WTC11 (cell line): ENCODE measurements at regions of chr11 and their contacts with region 1.

Region 1: GRCh38 chr11:57761301-57762234 is at the start of gene CTNND1:
- DNase-seq: peak; percentile 74
- ATAC-seq: peak; percentile 96
- H3K4me3 Mint-ChIP-seq: peak within 1 kb of the TSS; percentile 99
- H3K27ac Mint-ChIP-seq: peak within 1 kb of the TSS; percentile 100
- H3K4me1 Mint-ChIP-seq: peaks cover 34% of the 10 kb centered on the region
- H3K27me3 Mint-ChIP-seq: no peaks in the 10 kb centered on the region
- CTCF ChIP-seq: no peak
- total RNA-seq, gene CTNND1: 164 to 165 TPM (median 164 TPM) in 3 replicates

Region 2: GRCh38 chr11:57205041-57205671 is 556.4 kb before region 1 on chr11:
- CTCF ChIA-PET with region 1: no interaction called
- POLR2A ChIA-PET with region 1: no interaction called
- DNase-seq: no peak
- ATAC-seq: peak; percentile 89
- H3K4me3 Mint-ChIP-seq: peak overlapping the region; percentile 28; the same call in 1 of the 2 replicates
- H3K27ac Mint-ChIP-seq: peak overlapping the region; percentile 85; the same call in 1 of the 2 replicates
- H3K4me1 Mint-ChIP-seq: peaks cover 39% of the 10 kb centered on the region
- H3K27me3 Mint-ChIP-seq: peaks cover 4% of the 10 kb centered on the region
- CTCF ChIP-seq: no peak

Region 3: DNA sequence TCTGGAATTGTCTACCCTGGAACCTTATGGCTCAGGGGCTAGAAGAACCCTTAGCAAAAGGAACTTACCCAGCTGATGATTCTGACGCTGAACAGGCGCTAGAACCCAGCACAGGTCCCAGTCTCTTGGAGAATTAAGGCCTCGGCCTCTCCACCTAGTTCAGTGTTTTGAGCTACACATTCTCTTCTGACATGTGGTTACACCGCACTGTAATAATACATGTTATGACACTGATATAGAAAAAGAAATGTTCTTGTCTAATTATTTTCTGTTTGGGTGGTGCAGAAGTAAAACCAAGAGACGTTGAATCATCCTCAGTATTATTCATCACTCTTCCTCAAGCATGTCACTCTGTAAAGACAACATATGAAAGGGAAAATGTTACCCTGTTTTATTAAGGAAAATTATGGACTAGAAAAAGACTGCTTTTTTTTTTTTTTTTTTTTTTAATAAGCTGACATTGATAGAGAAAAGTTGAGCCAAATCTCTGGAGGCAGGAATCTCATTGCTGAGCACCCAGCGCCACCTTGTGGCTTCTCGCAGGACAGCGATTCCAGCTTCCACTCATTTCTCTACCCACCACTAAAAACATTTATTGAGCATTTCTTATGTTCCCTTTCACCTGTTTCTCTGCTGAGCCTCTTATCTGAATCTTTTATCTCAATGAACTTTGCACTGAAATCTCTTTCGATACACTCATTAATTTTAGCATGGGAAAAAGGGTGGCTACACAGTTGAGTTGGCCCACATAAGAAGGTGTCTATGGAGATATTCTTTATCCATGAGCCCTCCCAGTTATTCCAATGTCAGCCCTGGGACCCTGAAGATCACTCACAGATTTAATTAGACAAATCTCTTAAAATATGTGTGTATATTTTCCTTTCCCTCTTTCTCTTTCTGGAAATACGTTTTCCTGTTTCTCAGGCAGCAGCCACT is 511.9 kb before region 1 on chr11:
- CTCF ChIA-PET with region 1: no interaction called
- POLR2A ChIA-PET with region 1: no interaction called
- DNase-seq: peak; percentile 74
- ATAC-seq: peak; percentile 15; the same call in 1 of the 2 replicates
- H3K4me3 Mint-ChIP-seq: no peak overlapping the region
- H3K27ac Mint-ChIP-seq: no peak overlapping the region
- H3K4me1 Mint-ChIP-seq: no peaks in the 10 kb centered on the region; the same call in 1 of the 2 replicates
- H3K27me3 Mint-ChIP-seq: no peaks in the 10 kb centered on the region
- CTCF ChIP-seq: peak; percentile 85

Region 4: DNA sequence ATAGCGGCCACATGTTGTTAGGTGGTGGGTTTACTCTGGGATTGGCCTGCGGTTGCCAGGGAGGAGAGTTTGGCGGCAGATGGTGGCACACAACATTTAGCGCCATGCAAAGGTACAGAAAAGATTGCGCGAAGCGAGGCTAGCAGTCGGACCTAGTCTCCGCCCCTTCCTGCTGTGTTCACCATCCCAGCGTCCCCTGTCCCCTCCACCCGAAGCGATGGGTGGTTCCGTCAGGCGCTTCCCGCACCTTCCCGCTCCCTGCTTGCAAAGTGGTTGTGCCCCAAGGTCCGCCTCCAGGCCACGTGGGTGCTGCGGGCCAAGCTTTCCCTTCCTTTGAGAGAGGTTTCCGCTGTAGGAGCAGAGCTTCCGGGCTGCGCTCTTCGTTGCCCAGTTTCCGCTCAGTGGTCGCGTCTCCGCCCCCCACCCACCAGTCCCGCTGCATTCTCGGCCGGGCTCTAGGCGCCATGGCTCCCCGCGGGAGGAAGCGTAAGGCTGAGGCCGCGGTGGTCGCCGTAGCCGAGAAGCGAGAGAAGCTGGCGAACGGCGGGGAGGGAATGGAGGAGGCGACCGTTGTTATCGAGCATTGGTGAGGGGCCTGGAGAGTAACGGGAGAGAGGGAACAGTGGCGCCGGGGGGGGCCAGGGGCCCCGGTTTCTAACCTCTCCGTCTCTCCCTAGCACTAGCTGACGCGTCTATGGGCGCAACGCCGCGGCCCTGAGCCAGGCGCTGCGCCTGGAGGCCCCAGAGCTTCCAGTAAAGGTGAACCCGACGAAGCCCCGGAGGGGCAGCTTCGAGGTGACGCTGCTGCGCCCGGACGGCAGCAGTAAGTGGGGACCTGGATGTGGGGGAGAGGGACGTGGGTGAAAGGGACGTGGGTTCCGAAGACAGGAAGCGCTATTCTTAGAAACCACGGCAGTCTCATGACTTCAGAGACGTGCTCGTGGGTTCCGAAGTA is 20.2 kb before region 1 on chr11 and contains the start of gene SELENOH:
- CTCF ChIA-PET with region 1: interaction called, 4 read pairs
- POLR2A ChIA-PET with region 1: interaction called, 18 read pairs
- DNase-seq: peak; percentile 98
- ATAC-seq: peak; percentile 96
- H3K4me3 Mint-ChIP-seq: peak within 1 kb of the TSS; percentile 94
- H3K27ac Mint-ChIP-seq: peak within 1 kb of the TSS; percentile 97
- H3K4me1 Mint-ChIP-seq: peaks cover 15% of the 10 kb centered on the region
- H3K27me3 Mint-ChIP-seq: no peaks in the 10 kb centered on the region
- CTCF ChIP-seq: no peak
- total RNA-seq, gene SELENOH: 251 to 266 TPM (median 259 TPM) in 3 replicates